ENCODE measurements at regions of chr3 and their contacts with region 1.

Region 1: GRCh38 chr3:10764259-10765051 is 51.6 kb upstream of the SLC6A11 start:
- DNase-seq: no peak
- ATAC-seq: no peak
- H3K4me3 ChIP-seq: no peak overlapping the region
- H3K27ac ChIP-seq: no peak overlapping the region
- H3K4me1 ChIP-seq: no peaks in the 10 kb centered on the region
- H3K27me3 ChIP-seq: no peaks in the 10 kb centered on the region
- CTCF ChIP-seq: no peak
- POLR2A ChIP-seq: no peak

Region 2: DNA sequence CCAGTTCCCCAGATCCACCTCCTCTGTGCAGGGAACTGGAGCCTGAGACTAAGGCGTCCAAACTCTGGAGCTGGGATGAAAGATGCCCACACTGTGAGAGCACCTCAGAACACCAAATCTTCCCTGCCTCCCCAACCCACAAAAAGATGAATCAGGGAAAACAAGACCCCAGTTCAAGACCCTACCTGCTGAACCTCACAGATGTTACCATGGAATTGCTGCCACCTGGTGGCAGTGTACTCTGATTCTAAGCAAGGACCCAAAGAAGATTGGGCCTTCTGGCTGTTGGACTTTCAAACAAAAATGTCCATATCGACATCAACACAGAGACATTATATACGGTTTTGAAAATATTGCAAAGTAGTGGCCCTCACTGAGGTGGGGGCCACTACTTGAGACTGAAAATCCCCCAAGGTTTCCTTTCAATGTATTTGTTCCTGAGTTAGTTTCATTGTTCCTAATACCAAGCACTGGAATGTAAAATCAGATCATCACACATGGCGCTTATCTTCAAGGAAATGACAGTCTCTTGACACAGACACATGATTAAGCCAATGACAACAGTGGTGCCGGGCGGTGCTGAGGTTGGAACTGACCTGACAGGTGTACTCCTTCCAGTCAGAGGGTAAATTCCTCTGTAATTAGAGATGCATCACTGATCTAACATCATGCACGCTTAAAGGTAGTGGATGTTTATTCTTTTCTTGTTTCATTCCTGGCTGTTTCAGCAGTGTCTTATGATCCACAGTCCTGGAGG is 119.2 kb after region 1 on chr3:
- intact Hi-C with region 1: loop called (anchors 10 kb)
- DNase-seq: peak in 1 of 4 donors; percentile 5
- ATAC-seq: no peak
- H3K4me3 ChIP-seq: no peak overlapping the region
- H3K27ac ChIP-seq: no peak overlapping the region
- H3K4me1 ChIP-seq: no peaks in the 10 kb centered on the region
- H3K27me3 ChIP-seq: no peaks in the 10 kb centered on the region
- CTCF ChIP-seq: peak in 5 of 7 experiments; percentile 7 to 35 (median 11)
- POLR2A ChIP-seq: no peak

Region 3: GRCh38 chr3:10917176-10917575 is 152.7 kb after region 1 on chr3:
- intact Hi-C with region 1: no loop called
- DNase-seq: no peak
- ATAC-seq: no peak
- H3K4me3 ChIP-seq: no peak overlapping the region
- H3K27ac ChIP-seq: no peak overlapping the region
- H3K4me1 ChIP-seq: no peaks in the 10 kb centered on the region
- H3K27me3 ChIP-seq: no peaks in the 10 kb centered on the region
- CTCF ChIP-seq: no peak
- POLR2A ChIP-seq: no peak